ENCODE measurements at regions of chrX and their contacts with region 1.

Region 1: GRCh38 chrX:49915361-49916222 is 6.8 kb upstream of the CLCN5 start:
- DNase-seq: peak in 8 of 9 experiments; percentile 5 to 73 (median 50)
- ATAC-seq: peak; percentile 73
- H3K4me3 ChIP-seq: no peak overlapping the region
- H3K4me3 Mint-ChIP-seq: no peak overlapping the region
- H3K27ac ChIP-seq: no peak overlapping the region
- H3K27ac Mint-ChIP-seq: no peak overlapping the region
- H3K4me1 ChIP-seq: peaks cover 2% of the 10 kb centered on the region
- H3K4me1 Mint-ChIP-seq: peaks cover under 1% of the 10 kb centered on the region
- H3K27me3 ChIP-seq: no peaks in the 10 kb centered on the region
- H3K27me3 Mint-ChIP-seq: no peaks in the 10 kb centered on the region
- CTCF ChIP-seq: peak; percentile 58

Region 2: DNA sequence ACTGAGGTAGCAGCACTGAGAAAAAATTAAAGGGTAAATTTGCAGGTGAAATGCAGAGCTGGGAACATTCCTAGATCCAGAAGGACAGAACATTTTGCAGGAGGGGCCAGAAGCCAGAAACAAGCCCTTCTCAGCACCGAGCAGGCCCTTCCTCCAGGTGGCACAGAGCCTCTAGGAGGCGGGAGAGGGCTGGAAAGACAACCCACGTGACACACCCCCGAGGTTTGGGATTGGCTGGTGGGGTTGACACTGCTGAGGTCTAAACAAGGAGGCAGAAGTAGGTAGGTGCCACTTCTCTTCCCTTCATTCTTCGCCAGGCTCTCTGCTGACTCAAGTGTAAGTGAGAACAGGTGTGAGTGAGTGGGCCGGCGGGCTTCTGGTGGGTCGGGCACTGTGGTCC is 86.6 kb before region 1 on chrX and contains the start of gene PAGE4:
- CTCF ChIA-PET with region 1: no interaction called
- POLR2A ChIA-PET with region 1: no interaction called
- intact Hi-C with region 1: no loop called
- DNase-seq: no peak
- ATAC-seq: no peak
- H3K4me3 ChIP-seq: no peak within 1 kb of the TSS
- H3K4me3 Mint-ChIP-seq: no peak within 1 kb of the TSS
- H3K27ac ChIP-seq: no peak within 1 kb of the TSS
- H3K27ac Mint-ChIP-seq: no peak within 1 kb of the TSS
- H3K4me1 ChIP-seq: no peaks in the 10 kb centered on the region
- H3K4me1 Mint-ChIP-seq: no peaks in the 10 kb centered on the region
- H3K27me3 ChIP-seq: no peaks in the 10 kb centered on the region
- H3K27me3 Mint-ChIP-seq: peaks cover 10% of the 10 kb centered on the region
- CTCF ChIP-seq: no peak
- total RNA-seq, gene PAGE4: not detected

Region 3: DNA sequence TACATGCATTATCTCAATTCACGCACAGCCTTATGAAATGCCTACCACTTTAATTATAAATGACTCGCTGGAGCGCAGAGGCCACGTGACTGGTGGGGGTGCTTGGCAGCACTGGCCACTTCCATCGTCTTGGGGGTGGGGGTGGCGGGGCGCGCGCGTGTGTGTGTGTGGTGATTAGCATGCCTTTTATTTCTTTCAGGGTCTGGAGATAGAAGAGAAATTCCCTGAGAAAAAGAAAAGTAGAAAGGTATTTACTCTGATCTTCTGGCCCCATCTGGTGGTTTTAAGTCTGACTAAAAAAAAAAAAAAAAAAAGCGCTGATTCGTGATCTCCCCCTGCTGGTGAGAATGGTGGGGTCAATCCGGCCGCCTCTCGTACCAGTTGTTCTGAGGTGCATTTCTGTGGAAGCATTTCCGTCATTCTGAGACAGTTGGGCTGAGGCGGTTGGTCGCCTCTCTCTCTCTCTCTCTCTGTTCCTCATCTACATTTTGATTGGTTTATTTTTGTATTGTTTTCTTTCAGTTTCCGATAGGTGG is 288.8 kb after region 1 on chrX and contains the start of gene CCNB3:
- CTCF ChIA-PET with region 1: interaction called, 8 read pairs
- POLR2A ChIA-PET with region 1: no interaction called
- intact Hi-C with region 1: loop called (anchors 2 kb)
- DNase-seq: peak; percentile 45 to 90 (median 64)
- ATAC-seq: peak; percentile 96
- H3K4me3 ChIP-seq: peak within 1 kb of the TSS; percentile 40 to 42
- H3K4me3 Mint-ChIP-seq: peak within 1 kb of the TSS; percentile 83
- H3K27ac ChIP-seq: peak within 1 kb of the TSS; percentile 56 to 59
- H3K27ac Mint-ChIP-seq: peak within 1 kb of the TSS; percentile 88
- H3K4me1 ChIP-seq: peaks cover 13% of the 10 kb centered on the region
- H3K4me1 Mint-ChIP-seq: peaks cover 9% of the 10 kb centered on the region
- H3K27me3 ChIP-seq: no peaks in the 10 kb centered on the region
- H3K27me3 Mint-ChIP-seq: no peaks in the 10 kb centered on the region
- CTCF ChIP-seq: peak; percentile 46
- total RNA-seq, gene CCNB3: 0.49 TPM in 1 of 2 experiments, not detected in the other

Region 4: DNA sequence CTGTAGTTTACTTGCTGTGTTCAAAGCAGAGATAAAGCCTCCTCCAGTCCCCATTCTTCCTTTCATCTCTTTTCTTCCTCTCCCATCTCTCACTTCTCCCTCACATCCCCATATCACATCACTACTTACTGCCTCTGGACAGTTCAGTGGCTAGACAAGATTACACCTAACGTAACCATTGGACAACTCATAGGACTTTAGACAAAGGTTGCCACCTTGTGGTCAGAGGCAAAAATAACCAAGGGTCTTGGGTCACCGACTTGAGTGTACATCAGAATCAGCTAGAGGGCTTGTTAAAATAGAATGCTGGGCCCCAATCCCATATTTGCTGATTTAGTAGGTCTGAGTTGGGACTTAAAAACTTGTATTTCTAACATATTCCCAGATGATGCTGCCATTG is 664.4 kb after region 1 on chrX:
- CTCF ChIA-PET with region 1: interaction called, 6 read pairs
- POLR2A ChIA-PET with region 1: no interaction called
- intact Hi-C with region 1: loop called (anchors 1 kb)
- DNase-seq: peak in 6 of 9 experiments; percentile 4 to 59 (median 22)
- ATAC-seq: no peak
- H3K4me3 ChIP-seq: no peak overlapping the region
- H3K4me3 Mint-ChIP-seq: no peak overlapping the region
- H3K27ac ChIP-seq: no peak overlapping the region
- H3K27ac Mint-ChIP-seq: no peak overlapping the region
- H3K4me1 ChIP-seq: no peaks in the 10 kb centered on the region
- H3K4me1 Mint-ChIP-seq: no peaks in the 10 kb centered on the region
- H3K27me3 ChIP-seq: no peaks in the 10 kb centered on the region
- H3K27me3 Mint-ChIP-seq: peaks cover 9% of the 10 kb centered on the region
- CTCF ChIP-seq: peak; percentile 46